HEK293 (cell line): ENCODE measurements at regions of chr6 and their contacts with region 1.

Region 1: GRCh38 chr6:44397424-44398164 is 10.1 kb downstream of the CDC5L start:
- H3K4me3 ChIP-seq: no peak overlapping the region
- H3K27ac ChIP-seq: no peak overlapping the region
- H3K4me1 ChIP-seq: no peaks in the 10 kb centered on the region
- CTCF ChIP-seq: no peak

Region 2: GRCh38 chr6:43977404-43978111 is 420.0 kb before region 1 on chr6:
- CTCF ChIA-PET with region 1: no interaction called
- POLR2A ChIA-PET with region 1: no interaction called
- H3K4me3 ChIP-seq: no peak overlapping the region
- H3K27ac ChIP-seq: no peak overlapping the region
- H3K4me1 ChIP-seq: no peaks in the 10 kb centered on the region
- CTCF ChIP-seq: no peak

Region 3: GRCh38 chr6:44387346-44388133 is 10.1 kb before region 1 on chr6 and contains the start of gene CDC5L:
- CTCF ChIA-PET with region 1: interaction called, 4 read pairs
- POLR2A ChIA-PET with region 1: interaction called, 21 read pairs
- H3K4me3 ChIP-seq: peak within 1 kb of the TSS; percentile 76
- H3K27ac ChIP-seq: peak within 1 kb of the TSS; percentile 96
- H3K4me1 ChIP-seq: peaks cover 8% of the 10 kb centered on the region
- CTCF ChIP-seq: 0 out of 2 replicates have a peak, but pooled peaks have one; percentile 22